PC-9 (cell line): ENCODE measurements at regions of chr3 and their contacts with region 1.

Region 1: DNA sequence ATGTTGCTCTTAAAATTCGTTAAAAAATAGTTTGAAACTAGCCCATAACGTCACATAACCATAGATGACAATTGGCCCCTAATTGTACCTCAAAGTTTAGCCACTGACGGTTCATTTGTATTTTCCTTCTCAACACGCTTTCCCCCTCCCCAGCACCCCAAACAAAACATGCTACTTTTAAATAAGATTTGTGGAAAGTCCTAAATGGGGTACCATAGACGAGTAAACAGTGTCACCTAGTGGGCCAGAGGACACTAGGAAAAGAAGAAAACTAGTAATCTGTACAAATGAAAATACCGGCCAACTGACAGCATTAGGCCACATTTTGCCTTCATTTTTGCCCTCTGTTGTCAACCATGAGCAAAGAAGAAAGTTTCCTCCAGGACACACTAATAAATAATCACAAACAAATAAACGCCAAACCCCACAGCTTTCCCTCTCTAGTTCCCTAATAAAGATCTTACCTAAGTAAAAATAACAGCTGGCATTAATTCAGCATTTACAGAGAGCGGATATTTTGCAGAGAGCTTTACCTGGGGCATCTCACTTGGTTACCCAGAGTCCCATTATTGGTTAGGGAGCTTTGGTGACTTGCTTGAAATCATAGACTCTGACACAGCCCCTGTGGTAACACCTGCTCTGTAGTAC is 175.1 kb upstream of the ATP11B start:
- DNase-seq: peak in 1 of 2 experiments; percentile 62
- H3K4me3 ChIP-seq: no peak overlapping the region
- H3K27ac ChIP-seq: peak overlapping the region; percentile 68
- H3K4me1 ChIP-seq: peaks cover 14% of the 10 kb centered on the region
- H3K27me3 ChIP-seq: no peaks in the 10 kb centered on the region
- CTCF ChIP-seq: peak; percentile 95

Region 2: GRCh38 chr3:181210275-181210674 is 1407.9 kb before region 1 on chr3:
- CTCF ChIA-PET with region 1: no interaction called
- POLR2A ChIA-PET with region 1: no interaction called
- intact Hi-C with region 1: loop called (anchors 2 kb)
- DNase-seq: no peak
- H3K4me3 ChIP-seq: no peak overlapping the region
- H3K27ac ChIP-seq: no peak overlapping the region
- H3K4me1 ChIP-seq: no peaks in the 10 kb centered on the region
- H3K27me3 ChIP-seq: no peaks in the 10 kb centered on the region
- CTCF ChIP-seq: peak; percentile 72

Region 3: GRCh38 chr3:181555681-181556080 is 1062.5 kb before region 1 on chr3:
- CTCF ChIA-PET with region 1: no interaction called
- POLR2A ChIA-PET with region 1: no interaction called
- intact Hi-C with region 1: loop called (anchors 10 kb)
- DNase-seq: no peak
- H3K4me3 ChIP-seq: no peak overlapping the region
- H3K27ac ChIP-seq: no peak overlapping the region
- H3K4me1 ChIP-seq: no peaks in the 10 kb centered on the region
- H3K27me3 ChIP-seq: no peaks in the 10 kb centered on the region
- CTCF ChIP-seq: no peak

Region 4: DNA sequence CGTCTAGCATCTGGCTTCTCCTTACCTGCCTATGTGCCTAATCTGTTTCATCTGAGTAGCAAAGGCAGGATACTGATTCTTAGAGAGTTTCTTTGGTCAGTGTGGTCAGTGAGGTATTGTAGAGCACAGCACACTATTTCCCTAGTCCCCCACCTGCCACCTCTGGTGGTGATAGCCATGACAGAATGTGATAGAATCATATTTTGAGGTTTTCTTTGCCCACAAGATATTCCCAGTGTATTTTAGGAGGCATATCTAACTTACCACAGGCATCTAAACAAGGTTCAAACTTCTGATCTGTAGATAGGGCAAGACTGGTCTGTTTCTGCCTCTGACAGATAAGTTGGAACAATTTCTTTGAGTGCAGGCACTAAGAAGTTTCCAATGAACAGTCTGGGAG is 718.5 kb before region 1 on chr3:
- CTCF ChIA-PET with region 1: no interaction called
- POLR2A ChIA-PET with region 1: no interaction called
- intact Hi-C with region 1: loop called (anchors 2 kb)
- DNase-seq: peak; percentile 64 to 66
- H3K4me3 ChIP-seq: no peak overlapping the region
- H3K27ac ChIP-seq: no peak overlapping the region
- H3K4me1 ChIP-seq: no peaks in the 10 kb centered on the region
- H3K27me3 ChIP-seq: no peaks in the 10 kb centered on the region
- CTCF ChIP-seq: no peak

Region 5: DNA sequence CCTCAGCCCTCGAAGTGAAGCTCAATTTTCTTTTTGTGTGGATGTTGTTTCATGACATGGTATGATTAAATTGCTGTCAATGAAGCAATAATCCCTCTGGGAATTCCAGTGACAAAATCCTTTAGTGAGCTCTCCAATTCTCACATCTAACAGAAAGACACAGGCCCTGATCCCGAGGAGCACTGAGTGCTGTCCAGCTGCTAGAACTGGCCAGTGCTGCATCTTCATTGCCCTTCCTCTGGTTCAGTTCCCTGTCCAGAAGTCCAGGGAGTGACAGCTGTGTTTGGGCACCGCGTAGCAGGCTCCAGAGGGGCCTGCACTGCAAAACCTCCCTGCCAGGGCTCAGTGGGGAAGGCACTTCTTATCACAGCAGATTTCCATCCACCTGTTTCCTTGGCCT is 341.7 kb before region 1 on chr3:
- CTCF ChIA-PET with region 1: no interaction called
- POLR2A ChIA-PET with region 1: no interaction called
- intact Hi-C with region 1: loop called (anchors 5 kb)
- DNase-seq: no peak
- H3K4me3 ChIP-seq: no peak overlapping the region
- H3K27ac ChIP-seq: no peak overlapping the region
- H3K4me1 ChIP-seq: no peaks in the 10 kb centered on the region
- H3K27me3 ChIP-seq: no peaks in the 10 kb centered on the region
- CTCF ChIP-seq: no peak

Region 6: GRCh38 chr3:182683453-182683852 is 65.2 kb after region 1 on chr3:
- CTCF ChIA-PET with region 1: interaction called, 3 read pairs
- POLR2A ChIA-PET with region 1: no interaction called
- intact Hi-C with region 1: loop called (anchors 1 kb)
- DNase-seq: peak; percentile 72 to 81
- H3K4me3 ChIP-seq: peak overlapping the region; percentile 74; the same call in 1 of the 2 replicates
- H3K27ac ChIP-seq: no peak overlapping the region
- H3K4me1 ChIP-seq: peaks cover 17% of the 10 kb centered on the region
- H3K27me3 ChIP-seq: no peaks in the 10 kb centered on the region
- CTCF ChIP-seq: peak; percentile 99